Ascending aorta (tissue), 2 donors: ENCODE measurements at regions of chr5 and their contacts with region 1.

Region 1: DNA sequence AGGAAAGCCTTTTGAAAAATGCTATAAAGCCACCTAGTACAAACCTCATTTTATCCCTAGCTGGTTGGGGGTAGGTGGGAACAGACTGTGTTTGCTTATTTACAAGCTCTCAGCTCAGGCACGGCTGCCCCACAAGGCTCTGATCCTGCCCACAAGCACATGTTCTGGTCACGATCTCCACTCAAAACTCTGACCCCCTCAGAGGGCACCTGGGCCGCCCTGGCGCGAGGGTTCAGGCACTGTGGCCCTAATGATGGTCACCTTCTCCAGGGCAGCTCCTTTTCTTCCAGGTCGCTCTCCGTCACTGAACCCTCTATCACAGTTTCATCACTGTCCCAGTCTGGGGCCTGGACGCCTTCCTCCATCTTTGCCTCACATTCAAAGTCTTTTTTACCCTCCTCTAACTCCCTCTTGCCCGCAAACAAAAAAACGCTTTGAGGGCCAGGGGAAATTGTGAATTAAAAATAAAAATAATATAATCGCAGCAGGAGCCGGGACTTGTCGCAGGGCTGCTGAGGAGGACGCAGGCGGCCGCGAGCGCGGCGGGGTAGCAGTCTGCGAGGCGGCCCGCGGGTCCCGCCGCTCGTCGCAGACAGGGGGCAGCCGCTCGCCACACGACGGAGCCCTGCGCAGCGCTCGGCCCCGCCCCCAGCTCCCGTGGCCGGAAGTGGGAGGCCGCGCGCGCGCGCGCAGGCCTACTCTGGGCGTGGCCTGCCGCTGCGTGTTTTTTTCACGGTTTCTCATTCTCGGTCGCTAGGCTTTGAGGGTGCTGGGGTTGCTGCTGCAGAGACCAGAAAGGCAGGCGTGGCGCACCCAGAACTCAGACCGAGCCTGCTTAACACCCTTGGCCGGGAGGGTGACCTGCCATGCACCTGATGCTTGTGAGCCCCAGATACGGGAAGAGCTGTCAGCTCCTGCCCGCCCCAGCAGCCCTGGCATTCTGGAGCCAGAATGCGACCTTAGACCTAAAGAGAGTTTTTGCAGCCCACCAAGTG is at the start of gene ANKRD31:
- DNase-seq: peak; percentile 30 to 89
- H3K4me3 ChIP-seq: peak within 1 kb of the TSS; percentile 61 to 91
- H3K27ac ChIP-seq: peak within 1 kb of the TSS; percentile 75 to 76
- H3K4me1 ChIP-seq: no peaks in the 10 kb centered on the region
- H3K27me3 ChIP-seq: no peaks in the 10 kb centered on the region
- CTCF ChIP-seq: peak; percentile 59 to 92 (median 65)
- total RNA-seq, gene ANKRD31: not detected

Region 2: GRCh38 chr5:74446725-74447241 is 789.8 kb before region 1 on chr5:
- intact Hi-C with region 1: no loop called
- DNase-seq: no peak
- H3K4me3 ChIP-seq: no peak overlapping the region
- H3K27ac ChIP-seq: no peak overlapping the region
- H3K4me1 ChIP-seq: no peaks in the 10 kb centered on the region
- H3K27me3 ChIP-seq: no peaks in the 10 kb centered on the region
- CTCF ChIP-seq: no peak

Region 3: GRCh38 chr5:75681125-75681830 is 444.7 kb after region 1 on chr5:
- intact Hi-C with region 1: loop called (anchors 2 kb)
- DNase-seq: no peak
- H3K4me3 ChIP-seq: peak overlapping the region in 1 of 2 donors; percentile 41
- H3K27ac ChIP-seq: no peak overlapping the region
- H3K4me1 ChIP-seq: no peaks in the 10 kb centered on the region
- H3K27me3 ChIP-seq: no peaks in the 10 kb centered on the region
- CTCF ChIP-seq: peak; percentile 47 to 83 (median 76)

Region 4: DNA sequence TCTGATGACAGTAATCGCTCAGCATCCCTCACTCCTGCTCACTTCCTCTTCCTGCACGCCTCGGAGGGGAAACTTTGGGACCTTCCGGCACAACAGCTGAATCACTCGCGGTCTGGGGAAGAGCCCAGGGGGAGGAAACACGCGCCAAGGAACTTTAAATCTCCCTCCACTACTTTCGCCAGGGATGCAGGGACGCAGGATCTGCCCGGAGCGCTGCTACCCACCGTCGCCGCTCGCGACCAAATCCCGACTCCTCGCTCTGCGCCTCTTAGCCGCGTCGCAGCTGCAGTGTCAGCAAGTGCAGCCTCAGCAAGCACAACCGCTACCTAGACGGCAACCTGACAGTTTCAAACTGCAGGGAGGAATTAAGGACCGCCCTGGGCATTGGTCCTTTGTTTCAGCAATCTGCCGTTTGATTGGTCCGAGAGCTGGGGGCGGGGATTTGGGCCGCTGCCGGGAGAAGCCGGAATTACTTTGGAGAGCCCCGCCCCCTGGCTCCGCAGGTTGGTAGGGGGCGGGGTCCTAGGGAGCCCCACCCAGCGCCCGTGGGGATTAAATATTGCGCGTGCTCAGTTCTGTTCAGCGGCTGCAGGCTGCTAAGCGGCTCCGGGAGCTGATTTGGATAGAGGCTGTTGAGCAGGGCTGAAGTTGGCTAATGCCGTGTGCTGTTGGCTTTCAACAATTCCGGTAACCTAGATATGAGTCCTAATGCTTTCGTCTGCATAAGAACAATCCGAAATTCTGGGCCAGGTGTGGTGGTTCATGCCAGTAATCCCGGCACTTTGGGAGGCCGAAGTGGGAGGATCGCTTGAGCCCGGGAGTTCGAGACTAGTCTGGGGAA is 480.7 kb after region 1 on chr5 and contains the start of gene POC5:
- intact Hi-C with region 1: loop called (anchors 2 kb)
- DNase-seq: peak; percentile 87 to 98
- H3K4me3 ChIP-seq: peak within 1 kb of the TSS; percentile 64 to 77
- H3K27ac ChIP-seq: peak within 1 kb of the TSS; percentile 72 to 75
- H3K4me1 ChIP-seq: peaks cover 0 to 10% of the 10 kb centered on the region in 2 donors
- H3K27me3 ChIP-seq: no peaks in the 10 kb centered on the region
- CTCF ChIP-seq: no peak
- total RNA-seq, gene POC5: 5.3 TPM